T-cell (primary cell): ENCODE measurements at regions of chr5 and their contacts with region 1.

Region 1: DNA sequence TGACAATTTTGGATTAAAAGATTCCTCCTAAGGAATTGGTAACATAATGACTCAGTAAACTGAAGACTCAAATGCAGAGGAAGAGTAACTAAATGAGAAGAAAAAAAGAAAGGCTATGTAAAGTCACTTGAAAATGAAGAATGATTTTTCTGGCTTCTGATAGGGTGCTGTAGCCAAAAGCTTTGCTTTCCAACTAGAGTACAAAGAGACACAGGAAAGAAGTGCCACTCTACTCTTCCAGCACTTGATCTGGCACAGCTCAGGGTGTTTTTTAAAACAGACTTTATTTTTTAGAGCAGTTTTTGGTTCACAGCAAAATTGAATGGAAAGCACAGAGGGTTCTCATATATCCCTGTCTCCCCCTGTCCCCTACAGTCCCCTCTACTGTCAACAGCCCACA is 122.5 kb downstream of the LMNB1 start:
- DNase-seq: no peak
- ATAC-seq: no peak
- H3K4me3 ChIP-seq: no peak overlapping the region
- H3K4me3 Mint-ChIP-seq: no peak overlapping the region
- H3K27ac ChIP-seq: no peak overlapping the region
- H3K27ac Mint-ChIP-seq: no peak overlapping the region
- H3K4me1 ChIP-seq: no peaks in the 10 kb centered on the region
- H3K4me1 Mint-ChIP-seq: no peaks in the 10 kb centered on the region
- H3K27me3 ChIP-seq: no peaks in the 10 kb centered on the region
- H3K27me3 Mint-ChIP-seq: no peaks in the 10 kb centered on the region

Region 2: DNA sequence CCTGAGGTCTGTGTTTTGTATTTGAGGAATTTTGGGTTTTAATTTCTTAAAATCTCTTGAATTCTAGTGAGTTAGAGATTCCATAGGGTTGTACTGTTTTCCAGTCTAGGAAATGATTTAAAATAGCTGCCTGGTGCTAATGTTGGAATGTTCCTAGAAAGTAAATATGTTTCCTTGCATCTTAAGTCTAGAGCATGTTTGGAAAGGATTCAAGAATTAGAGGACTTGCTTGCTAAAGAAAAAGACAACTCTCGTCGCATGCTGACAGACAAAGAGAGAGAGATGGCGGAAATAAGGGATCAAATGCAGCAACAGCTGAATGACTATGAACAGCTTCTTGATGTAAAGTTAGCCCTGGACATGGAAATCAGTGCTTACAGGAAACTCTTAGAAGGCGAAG is 80.7 kb before region 1 on chr5:
- CTCF ChIA-PET with region 1: no interaction called
- POLR2A ChIA-PET with region 1: interaction called in 1 of 2 experiments, 10 read pairs
- DNase-seq: no peak
- ATAC-seq: no peak
- H3K4me3 ChIP-seq: no peak overlapping the region
- H3K4me3 Mint-ChIP-seq: no peak overlapping the region
- H3K27ac ChIP-seq: no peak overlapping the region
- H3K27ac Mint-ChIP-seq: no peak overlapping the region
- H3K4me1 ChIP-seq: no peaks in the 10 kb centered on the region
- H3K4me1 Mint-ChIP-seq: peaks cover 0 to 12% (median 0%) of the 10 kb centered on the region in 3 donors
- H3K27me3 ChIP-seq: no peaks in the 10 kb centered on the region
- H3K27me3 Mint-ChIP-seq: no peaks in the 10 kb centered on the region

Region 3: DNA sequence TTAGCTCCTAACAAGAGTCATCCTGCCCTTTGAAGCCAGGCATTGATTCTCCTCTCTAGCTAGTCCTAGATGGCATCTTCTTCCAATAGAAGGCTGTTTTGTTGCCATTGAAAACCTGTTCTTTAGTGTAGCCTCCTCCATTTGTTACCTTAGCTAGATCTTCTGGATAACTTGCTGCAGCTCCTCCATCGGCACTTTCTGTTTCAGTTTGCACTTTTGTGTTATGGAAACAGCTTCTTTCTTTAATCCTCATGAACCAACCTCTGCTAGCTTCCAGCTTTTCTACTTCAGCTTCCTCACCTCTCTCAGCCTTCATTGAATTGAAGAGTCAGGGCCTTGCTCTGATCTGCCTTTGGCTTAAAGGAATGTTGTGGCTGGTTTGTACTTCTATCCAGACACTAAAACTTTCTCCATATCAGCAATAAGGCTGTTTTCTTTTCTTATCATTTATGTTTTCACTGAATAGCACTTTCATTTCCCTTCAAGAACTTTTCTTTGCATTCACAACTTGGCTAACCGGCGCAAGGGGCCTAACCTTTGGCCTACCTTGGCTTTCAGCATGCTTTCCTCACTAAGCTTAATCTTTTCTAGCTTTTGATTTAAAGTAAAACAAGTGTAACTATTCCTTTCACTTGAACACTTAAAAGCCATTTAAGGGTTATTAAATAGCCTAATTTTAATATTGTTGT is 1017.6 kb after region 1 on chr5:
- CTCF ChIA-PET with region 1: no interaction called
- POLR2A ChIA-PET with region 1: no interaction called
- DNase-seq: peak in 1 of 35 experiments; percentile 4
- ATAC-seq: no peak
- H3K4me3 ChIP-seq: peak overlapping the region in 1 of 2 donors; percentile 3
- H3K4me3 Mint-ChIP-seq: peak overlapping the region in 2 of 3 donors; percentile 14 to 28
- H3K27ac ChIP-seq: no peak overlapping the region
- H3K27ac Mint-ChIP-seq: peak overlapping the region; percentile 8 to 15
- H3K4me1 ChIP-seq: peaks cover 0 to 2% of the 10 kb centered on the region in 2 experiments
- H3K4me1 Mint-ChIP-seq: peaks cover 8 to 10% (median 10%) of the 10 kb centered on the region in 3 donors
- H3K27me3 ChIP-seq: no peaks in the 10 kb centered on the region
- H3K27me3 Mint-ChIP-seq: peaks cover 0 to 2% of the 10 kb centered on the region in 2 donors